Mammary epithelial cell (primary cell): ENCODE measurements at regions of chr4 and their contacts with region 1.

Region 1: DNA sequence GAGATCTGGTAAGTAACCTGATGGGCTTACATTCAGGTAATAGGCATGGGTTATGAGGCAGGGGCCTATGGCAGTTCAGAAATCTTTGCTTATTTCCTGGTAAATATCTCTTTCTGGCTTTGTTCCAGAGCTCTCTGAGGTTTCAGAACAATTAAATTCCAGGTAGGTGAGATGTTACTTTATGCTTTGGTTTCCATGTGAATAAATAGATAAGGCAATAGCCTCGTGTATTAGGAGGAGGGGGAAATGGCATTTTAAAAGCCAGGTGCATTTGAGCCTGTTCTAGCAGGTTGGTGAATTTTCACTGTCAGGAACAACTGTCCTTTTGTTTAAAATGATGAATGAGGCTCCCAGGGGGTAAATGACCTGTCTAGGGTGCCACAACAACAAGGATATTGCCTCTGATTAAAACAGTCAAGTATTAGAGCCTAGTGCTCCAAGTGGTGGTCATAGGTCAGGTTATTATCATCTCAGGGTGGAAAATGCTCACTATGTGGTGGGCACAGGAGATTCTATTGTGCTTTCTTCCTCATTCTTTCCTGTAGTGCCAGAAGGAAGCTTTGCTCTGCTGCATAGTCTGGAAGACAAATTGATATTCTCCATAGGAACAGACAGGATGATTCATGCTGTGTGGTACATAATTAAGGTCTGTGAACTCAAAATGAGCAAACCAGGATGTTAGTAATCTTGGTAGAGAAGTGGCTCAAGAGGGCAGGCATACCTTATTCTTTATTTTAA is 296.2 kb downstream of the INPP4B start:
- DNase-seq: peak; percentile 97
- H3K4me3 ChIP-seq: no peak overlapping the region
- H3K27ac ChIP-seq: peak overlapping the region; percentile 100
- H3K4me1 ChIP-seq: peaks cover 43% of the 10 kb centered on the region
- H3K27me3 ChIP-seq: no peaks in the 10 kb centered on the region
- CTCF ChIP-seq: peak in 1 of 2 donors; percentile 11

Region 2: GRCh38 chr4:142512161-142512560 is 37.7 kb before region 1 on chr4:
- CTCF ChIA-PET with region 1: no interaction called
- dilution Hi-C with region 1: loop called (anchors 5 kb)
- in situ Hi-C with region 1: no loop called
- intact Hi-C with region 1: no loop called
- DNase-seq: peak; percentile 53
- H3K4me3 ChIP-seq: no peak overlapping the region
- H3K27ac ChIP-seq: no peak overlapping the region
- H3K4me1 ChIP-seq: peaks cover 12% of the 10 kb centered on the region
- H3K27me3 ChIP-seq: no peaks in the 10 kb centered on the region
- CTCF ChIP-seq: no peak

Region 3: GRCh38 chr4:142984871-142985585 is 435.1 kb after region 1 on chr4:
- CTCF ChIA-PET with region 1: no interaction called
- dilution Hi-C with region 1: no loop called
- in situ Hi-C with region 1: no loop called
- intact Hi-C with region 1: no loop called
- DNase-seq: peak; percentile 16
- H3K4me3 ChIP-seq: no peak overlapping the region
- H3K27ac ChIP-seq: no peak overlapping the region
- H3K4me1 ChIP-seq: no peaks in the 10 kb centered on the region
- H3K27me3 ChIP-seq: peaks cover 11% of the 10 kb centered on the region
- CTCF ChIP-seq: peak; percentile 44 to 59